ENCODE measurements at regions of chr15 and their contacts with region 1.

Region 1: DNA sequence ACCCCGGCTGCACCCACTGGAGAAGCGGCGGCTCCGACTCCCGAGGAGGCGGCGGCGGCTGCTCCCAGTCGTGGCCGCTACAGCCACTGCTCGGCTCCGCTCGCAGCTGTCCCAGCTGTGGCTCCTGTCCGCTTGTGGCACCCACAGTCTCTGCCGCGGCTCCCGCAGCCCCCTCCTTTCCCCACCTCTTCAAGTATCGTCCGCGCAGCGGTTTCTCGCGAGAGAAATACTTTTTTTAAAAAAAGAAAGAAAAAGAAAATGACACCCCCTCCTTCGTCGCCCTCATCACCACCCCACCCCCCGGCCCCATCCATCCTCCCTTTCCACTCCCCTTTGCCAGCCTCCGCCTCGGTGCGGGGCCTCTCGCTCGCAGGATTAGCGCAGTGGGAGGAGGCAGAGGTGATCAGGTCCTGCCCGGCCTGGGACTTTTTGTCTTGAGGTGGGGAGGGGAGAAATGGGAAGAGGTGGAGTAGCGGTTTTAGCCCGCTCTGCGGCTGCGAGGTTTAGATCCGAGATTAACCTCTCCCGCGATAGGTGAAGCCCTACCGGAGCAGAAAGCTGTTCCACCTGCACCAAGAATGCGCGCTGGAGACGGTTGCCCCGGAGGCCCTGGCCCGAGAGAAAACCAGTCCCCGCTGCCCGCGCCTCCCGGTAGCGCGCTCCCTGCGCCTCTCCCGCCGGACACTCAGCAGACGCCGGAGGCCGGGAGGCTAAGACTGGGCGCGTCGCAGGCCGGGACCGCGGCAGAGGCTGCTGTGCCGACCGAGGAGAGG is at the start of gene FBN1:
- DNase-seq: peak in 9 of 10 donors; percentile 23 to 89 (median 80)
- H3K4me3 ChIP-seq: peak within 1 kb of the TSS; percentile 66 to 94 (median 84)
- H3K27ac ChIP-seq: peak within 1 kb of the TSS; percentile 80 to 98 (median 95)
- H3K27me3 ChIP-seq: no peaks in the 10 kb centered on the region
- CTCF ChIP-seq: peak in 2 of 56 donors; percentile 2 to 26
- total RNA-seq, gene FBN1: 18.2 to 42.8 (median 30.3) TPM

Region 2: GRCh38 chr15:48352474-48353072 is 293.2 kb before region 1 on chr15:
- intact Hi-C with region 1: loop called (anchors 5 to 10 kb)
- DNase-seq: peak in 7 of 10 donors; percentile 34 to 68 (median 46)
- H3K4me3 ChIP-seq: peak overlapping the region in 10 of 59 donors; percentile 4 to 34 (median 20)
- H3K27ac ChIP-seq: no peak overlapping the region
- H3K27me3 ChIP-seq: no peaks in the 10 kb centered on the region
- CTCF ChIP-seq: peak; percentile 56 to 90 (median 80)

Region 3: DNA sequence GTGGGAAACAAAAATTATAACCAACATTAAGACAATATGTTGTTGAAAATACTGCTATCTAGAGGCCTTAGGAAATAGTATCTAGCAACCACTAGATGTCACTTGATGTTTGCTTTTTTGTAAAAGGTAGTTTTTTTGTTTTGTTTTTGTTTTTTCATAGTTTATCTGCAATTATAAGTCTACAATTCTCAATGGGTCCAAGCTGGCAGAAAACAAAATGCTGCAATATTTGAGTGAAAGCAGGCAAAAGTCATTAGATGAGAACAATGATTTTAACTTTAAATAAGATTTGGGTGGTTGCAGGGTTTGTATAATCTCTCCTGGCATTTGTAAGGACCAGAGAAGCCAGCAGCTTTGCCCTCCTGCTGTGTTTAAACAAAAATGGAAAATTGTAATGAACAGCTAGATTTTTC is 287.5 kb before region 1 on chr15:
- intact Hi-C with region 1: loop called (anchors 5 to 10 kb)
- DNase-seq: no peak
- H3K4me3 ChIP-seq: peak overlapping the region in 10 of 59 donors; percentile 1 to 39 (median 7)
- H3K27ac ChIP-seq: no peak overlapping the region
- H3K27me3 ChIP-seq: no peaks in the 10 kb centered on the region
- CTCF ChIP-seq: peak; percentile 56 to 87 (median 73)

Region 4: GRCh38 chr15:48433226-48433886 is 212.4 kb before region 1 on chr15:
- intact Hi-C with region 1: loop called in 1 of 2 experiments (anchors 10 kb)
- DNase-seq: no peak
- H3K4me3 ChIP-seq: no peak overlapping the region
- H3K27ac ChIP-seq: no peak overlapping the region
- H3K27me3 ChIP-seq: no peaks in the 10 kb centered on the region
- CTCF ChIP-seq: no peak

Region 5: DNA sequence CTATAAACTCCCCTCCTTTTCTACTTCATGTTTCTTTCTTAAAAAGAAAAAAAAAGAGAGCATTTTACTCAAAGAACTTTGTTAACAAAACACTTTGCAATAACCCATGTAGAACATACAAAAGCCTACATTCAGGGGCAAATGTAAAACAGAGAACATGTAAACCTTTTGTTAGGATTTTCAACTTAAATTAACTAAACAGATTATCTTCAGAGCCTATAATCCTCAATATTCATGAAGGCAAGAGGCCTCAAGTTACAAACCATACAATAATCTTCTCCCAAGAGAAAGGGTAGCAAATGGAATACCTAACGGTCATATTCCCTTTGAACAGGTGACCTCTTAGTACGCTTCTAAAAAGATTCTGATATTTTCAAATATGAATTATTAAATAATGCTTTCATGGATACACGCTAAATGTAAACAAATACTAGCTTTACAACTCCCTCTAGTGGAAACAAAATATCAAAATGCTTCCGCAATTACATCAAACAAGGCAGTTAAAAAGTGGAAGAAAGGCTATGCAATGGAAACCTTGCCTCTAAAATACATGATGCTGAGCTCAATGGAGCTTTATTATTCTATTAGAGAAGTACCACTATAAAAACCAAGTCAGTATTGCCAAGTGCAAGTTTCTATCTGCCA is 155.2 kb after region 1 on chr15:
- intact Hi-C with region 1: loop called in 1 of 2 experiments (anchors 10 kb)
- DNase-seq: no peak
- H3K4me3 ChIP-seq: peak overlapping the region in 5 of 59 donors; percentile 5 to 38 (median 13)
- H3K27ac ChIP-seq: peak overlapping the region in 3 of 59 donors; percentile 3 to 8 (median 7)
- H3K27me3 ChIP-seq: no peaks in the 10 kb centered on the region
- CTCF ChIP-seq: peak; percentile 36 to 79 (median 65)

Region 6: DNA sequence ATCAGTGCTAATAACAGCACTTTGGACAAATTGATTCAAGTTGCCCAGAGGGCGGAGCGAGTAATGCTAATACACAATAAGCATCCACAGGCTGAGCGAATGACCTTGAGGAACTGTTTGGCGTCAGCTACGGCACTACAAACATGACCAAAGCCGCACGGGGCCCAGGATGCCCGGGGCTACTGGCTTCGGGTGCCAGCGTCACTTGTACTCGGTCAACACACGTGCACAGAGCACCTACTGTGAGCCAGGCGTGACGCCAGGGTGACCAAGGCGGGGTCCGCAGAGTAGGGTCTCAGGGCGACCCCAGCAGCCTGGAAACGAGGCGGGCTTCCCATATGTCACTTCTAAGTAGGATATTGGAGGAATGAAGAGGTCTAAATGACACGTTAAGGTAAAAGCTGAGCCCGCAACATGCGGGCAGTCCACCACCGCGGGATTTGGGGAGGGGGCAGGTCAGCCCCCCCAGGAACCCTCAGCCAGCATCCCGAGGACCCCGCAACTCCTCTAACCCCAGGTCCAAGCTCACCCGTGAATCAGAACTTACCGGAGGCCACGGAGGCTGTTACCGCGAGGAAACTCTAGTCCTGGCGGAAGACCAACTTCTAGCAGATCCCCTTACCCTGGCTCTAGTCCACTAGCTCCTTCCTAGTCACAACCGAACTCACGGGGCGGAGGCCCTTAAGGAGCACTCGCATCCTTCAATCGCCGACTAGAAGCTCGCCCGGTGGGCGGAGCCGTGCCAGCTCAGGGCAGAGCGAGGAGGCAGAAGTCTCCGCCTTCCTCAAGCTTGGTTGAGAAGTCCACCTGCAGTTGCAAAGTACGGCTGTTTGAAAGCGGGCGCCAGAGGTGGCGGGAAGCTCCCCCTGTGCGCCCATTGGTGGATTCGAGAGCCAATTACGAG is 164.9 kb after region 1 on chr15 and contains the start of gene CEP152:
- intact Hi-C with region 1: loop called (anchors 5 to 10 kb)
- DNase-seq: peak; percentile 79 to 98 (median 96)
- H3K4me3 ChIP-seq: peak within 1 kb of the TSS; percentile 56 to 94 (median 79)
- H3K27ac ChIP-seq: peak within 1 kb of the TSS in 2 of 59 donors; percentile 49 to 57
- H3K27me3 ChIP-seq: no peaks in the 10 kb centered on the region
- CTCF ChIP-seq: peak in 14 of 56 donors; percentile 5 to 33 (median 18)
- total RNA-seq, gene CEP152: 2.5 to 15.4 (median 5.8) TPM

Measured in dorsolateral prefrontal cortex (tissue), 120 donors.